ENCODE measurements at regions of chr9 and their contacts with region 1.

Region 1: GRCh38 chr9:76445976-76446375 is 13.0 kb upstream of the GCNT1 start:
- DNase-seq: no peak
- H3K4me3 ChIP-seq: no peak overlapping the region
- H3K27ac ChIP-seq: no peak overlapping the region
- H3K4me1 ChIP-seq: peaks cover 3 to 22% (median 5%) of the 10 kb centered on the region in 3 donors
- H3K27me3 ChIP-seq: no peaks in the 10 kb centered on the region
- CTCF ChIP-seq: no peak
- POLR2A ChIP-seq: no peak

Region 2: GRCh38 chr9:76662476-76663281 is 216.7 kb after region 1 on chr9:
- intact Hi-C with region 1: loop called (anchors 5 kb)
- DNase-seq: no peak
- H3K4me3 ChIP-seq: no peak overlapping the region
- H3K27ac ChIP-seq: no peak overlapping the region
- H3K4me1 ChIP-seq: peaks cover 0 to 15% (median 3%) of the 10 kb centered on the region in 3 donors
- H3K27me3 ChIP-seq: no peaks in the 10 kb centered on the region
- CTCF ChIP-seq: no peak
- POLR2A ChIP-seq: no peak

Region 3: DNA sequence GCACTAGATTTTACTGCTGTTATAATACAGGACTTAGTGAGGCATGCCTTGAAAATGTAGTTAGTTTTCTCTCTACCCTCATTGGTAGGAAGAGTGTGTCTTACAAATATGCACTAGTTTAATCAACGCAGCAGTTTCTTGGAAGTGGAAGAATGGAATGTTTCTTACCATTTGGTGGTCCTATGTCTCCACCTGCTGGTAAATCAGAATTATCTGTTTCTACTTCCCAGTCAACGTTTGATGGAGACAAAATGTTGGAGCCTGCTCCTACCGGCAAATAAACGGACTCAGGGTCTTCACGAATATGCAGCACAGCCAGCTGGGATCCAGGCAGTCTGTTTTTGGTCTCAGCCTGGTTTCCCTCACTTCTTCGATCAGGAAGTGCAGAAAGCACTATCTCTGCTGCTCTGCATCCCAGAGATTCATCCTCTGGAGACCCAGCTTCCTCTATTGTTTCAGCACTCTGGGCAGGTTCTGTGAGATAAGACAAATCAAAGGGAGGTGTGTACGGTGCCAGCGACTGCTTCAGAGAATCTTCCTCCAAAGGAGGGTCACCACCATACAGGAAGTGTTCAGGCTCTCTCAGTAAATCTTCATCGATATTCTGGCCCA is 258.7 kb after region 1 on chr9:
- intact Hi-C with region 1: loop called (anchors 5 kb)
- DNase-seq: no peak
- H3K4me3 ChIP-seq: no peak overlapping the region
- H3K27ac ChIP-seq: no peak overlapping the region
- H3K4me1 ChIP-seq: peaks cover 0 to 27% (median 0%) of the 10 kb centered on the region in 3 donors
- H3K27me3 ChIP-seq: peaks cover 0 to 31% (median 0%) of the 10 kb centered on the region in 4 donors
- CTCF ChIP-seq: peak in 5 of 6 experiments; percentile 58 to 72 (median 63)
- POLR2A ChIP-seq: no peak

Measured in esophagus squamous epithelium (tissue), 5 donors.